WTC11 (cell line): ENCODE measurements at regions of chr19 and their contacts with region 1.

Region 1: GRCh38 chr19:4390567-4391305 is 9.6 kb downstream of the SH3GL1 start:
- DNase-seq: peak; percentile 56
- ATAC-seq: peak; percentile 83
- H3K4me3 Mint-ChIP-seq: peak overlapping the region; percentile 66
- H3K27ac Mint-ChIP-seq: peak overlapping the region; percentile 96
- H3K4me1 Mint-ChIP-seq: peaks cover 46% of the 10 kb centered on the region
- H3K27me3 Mint-ChIP-seq: no peaks in the 10 kb centered on the region; the same call in 1 of the 2 replicates
- CTCF ChIP-seq: no peak

Region 2: GRCh38 chr19:4369888-4370260 is 20.9 kb before region 1 on chr19:
- CTCF ChIA-PET with region 1: interaction called, 48 read pairs
- POLR2A ChIA-PET with region 1: interaction called, 7 read pairs
- DNase-seq: peak; percentile 63
- ATAC-seq: peak; percentile 69
- H3K4me3 Mint-ChIP-seq: no peak overlapping the region
- H3K27ac Mint-ChIP-seq: peak overlapping the region; percentile 88; the same call in 1 of the 2 replicates
- H3K4me1 Mint-ChIP-seq: peaks cover 21% of the 10 kb centered on the region
- H3K27me3 Mint-ChIP-seq: no peaks in the 10 kb centered on the region
- CTCF ChIP-seq: no peak

Region 3: DNA sequence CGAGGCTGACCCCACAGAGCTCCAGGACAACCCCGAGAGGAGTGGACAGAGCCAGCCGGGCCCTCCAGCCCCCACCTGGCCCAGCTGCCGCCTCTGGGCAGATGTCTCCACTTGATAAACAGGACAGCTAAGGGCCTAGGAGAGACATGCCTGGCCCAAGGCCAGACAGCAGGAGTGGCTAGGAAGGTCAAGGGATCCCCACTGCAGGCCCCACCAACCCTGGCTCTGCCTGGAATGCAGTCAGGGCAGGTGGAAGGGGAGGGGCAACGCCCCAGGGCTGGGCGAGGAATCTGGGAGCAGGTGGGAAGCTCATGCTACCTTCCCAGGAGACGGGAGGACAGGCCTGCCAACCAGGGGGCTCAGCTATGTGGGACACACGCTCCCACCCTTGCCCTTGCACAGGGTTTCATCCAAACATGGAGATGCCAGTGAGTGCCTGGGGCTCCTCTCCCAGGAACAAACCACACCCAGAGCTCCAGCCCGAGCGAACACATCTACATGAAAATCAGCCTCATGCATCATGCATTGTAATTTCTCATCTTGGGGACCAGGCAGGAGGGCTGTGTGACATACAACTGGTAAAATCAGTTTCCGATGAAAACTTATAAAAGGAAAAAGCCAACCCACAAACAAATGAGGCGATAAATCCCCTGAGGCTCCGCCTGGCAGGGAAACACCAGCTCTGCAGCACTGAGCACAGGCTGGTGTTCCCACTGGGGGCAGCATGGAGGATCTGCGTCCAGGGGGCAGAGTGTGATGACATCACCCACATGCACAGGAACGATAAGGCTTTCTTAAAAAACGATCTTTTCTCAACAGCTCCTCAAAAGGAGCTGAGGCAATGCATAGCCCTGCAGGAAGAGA is 15.3 kb before region 1 on chr19:
- CTCF ChIA-PET with region 1: interaction called, 48 read pairs
- POLR2A ChIA-PET with region 1: interaction called, 7 read pairs
- DNase-seq: peak; percentile 84
- ATAC-seq: peak; percentile 79
- H3K4me3 Mint-ChIP-seq: no peak overlapping the region
- H3K27ac Mint-ChIP-seq: peak overlapping the region; percentile 88
- H3K4me1 Mint-ChIP-seq: peaks cover 47% of the 10 kb centered on the region
- H3K27me3 Mint-ChIP-seq: no peaks in the 10 kb centered on the region
- CTCF ChIP-seq: no peak